HCT116 (cell line): ENCODE measurements at regions of chr2 and their contacts with region 1.

Region 1: DNA sequence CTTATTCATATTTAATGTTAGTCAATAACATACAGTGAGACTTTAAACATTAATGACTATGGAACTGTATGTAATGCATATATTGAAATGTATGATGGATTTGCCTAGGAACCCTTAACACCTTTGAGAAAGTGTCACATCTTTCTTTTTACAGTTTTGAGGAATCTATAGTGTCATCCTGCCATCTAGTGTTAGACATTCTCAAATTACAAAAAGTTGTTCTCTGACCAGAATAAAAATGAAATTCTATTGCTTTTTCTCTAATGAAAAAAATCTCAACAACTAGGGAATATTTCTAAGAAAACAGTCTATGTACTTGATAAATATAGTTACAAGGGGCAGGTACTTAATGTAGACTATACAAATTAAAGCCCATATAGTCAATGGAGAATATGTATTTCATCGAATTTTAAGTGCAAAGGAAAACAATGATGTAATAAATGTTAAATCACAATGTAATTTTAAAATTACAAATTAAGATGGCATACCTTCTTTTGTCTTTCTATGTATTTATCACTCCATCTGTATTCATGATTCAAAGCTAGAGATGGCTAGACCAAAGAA is 5.1 kb upstream of the CALCRL start:
- DNase-seq: peak; percentile 29
- ATAC-seq: no peak
- H3K4me3 ChIP-seq: no peak overlapping the region
- H3K27ac ChIP-seq: no peak overlapping the region
- H3K4me1 ChIP-seq: peaks cover 0 to 6% of the 10 kb centered on the region in 2 experiments; a peak in 2 of 4 replicates
- H3K27me3 ChIP-seq: no peaks in the 10 kb centered on the region
- CTCF ChIP-seq: peak; percentile 18 to 61 (median 59); a peak in 4 of 6 replicates
- POLR2A ChIP-seq: no peak
- RAD21 ChIP-seq: peak; percentile 83

Region 2: DNA sequence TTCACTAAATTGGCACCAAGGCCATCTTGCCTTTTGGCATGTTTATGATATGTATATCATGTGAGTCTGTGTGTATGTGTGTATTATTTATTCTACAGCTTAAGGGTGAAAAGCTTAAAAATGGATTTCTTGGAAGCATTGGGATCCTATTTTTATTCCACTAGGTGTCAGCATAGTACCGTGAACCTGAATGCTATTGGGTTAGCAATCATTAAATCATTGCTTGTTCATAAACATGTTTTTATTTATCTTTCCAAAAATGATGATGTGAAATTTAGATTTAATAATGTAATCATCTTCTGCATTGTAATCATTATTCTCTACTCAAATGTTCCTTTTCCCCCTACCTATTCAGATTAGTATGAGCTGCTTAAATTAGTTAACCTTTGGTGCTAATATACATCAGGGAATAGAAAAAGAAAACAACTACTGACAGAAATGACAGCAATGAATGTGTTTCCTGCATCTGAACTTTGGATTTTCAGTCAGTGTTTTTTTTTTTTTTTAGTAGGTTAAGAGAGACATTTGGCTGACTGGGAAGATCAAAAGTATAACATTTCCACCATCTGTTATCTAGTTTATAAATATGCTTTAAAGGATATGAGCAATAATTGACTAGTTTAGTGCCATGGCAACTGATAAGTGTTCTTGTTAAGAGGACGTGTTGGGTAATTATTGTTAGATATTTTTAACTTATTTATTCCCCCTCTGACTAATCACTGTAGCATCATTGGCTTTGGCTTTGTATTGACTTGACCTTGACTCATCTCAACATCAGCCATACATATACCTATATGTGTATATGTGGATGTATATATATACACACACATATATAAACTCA is 590.1 kb before region 1 on chr2:
- CTCF ChIA-PET with region 1: interaction called, 50 read pairs
- POLR2A ChIA-PET with region 1: no interaction called
- RAD21 ChIA-PET with region 1: interaction called, 3 to 5 read pairs
- intact Hi-C with region 1: loop called (anchors 1 kb)
- DNase-seq: peak; percentile 32
- ATAC-seq: peak; percentile 78
- H3K4me3 ChIP-seq: no peak overlapping the region
- H3K27ac ChIP-seq: no peak overlapping the region
- H3K4me1 ChIP-seq: no peaks in the 10 kb centered on the region
- H3K27me3 ChIP-seq: no peaks in the 10 kb centered on the region
- CTCF ChIP-seq: peak; percentile 54 to 83 (median 61)
- POLR2A ChIP-seq: no peak
- RAD21 ChIP-seq: peak; percentile 87

Region 3: DNA sequence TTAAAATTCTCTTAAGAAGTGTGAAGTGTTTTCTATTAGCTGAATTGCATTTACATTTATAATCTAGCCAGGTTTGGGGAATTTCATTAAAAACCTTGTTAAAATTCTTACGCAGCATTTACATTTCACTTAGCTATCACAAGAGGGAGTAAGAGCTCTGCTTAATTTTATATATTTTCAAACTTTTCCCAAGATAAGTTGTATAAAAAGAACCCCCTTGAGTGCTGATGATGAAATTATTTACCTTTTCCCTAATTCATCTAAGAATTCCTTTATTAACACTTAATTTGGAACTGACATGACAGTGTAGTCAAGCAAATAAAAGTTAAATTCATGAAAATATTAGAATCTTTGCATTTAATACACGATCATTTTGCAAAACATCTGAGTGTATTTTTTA is 549.9 kb before region 1 on chr2:
- CTCF ChIA-PET with region 1: interaction called, 16 read pairs
- POLR2A ChIA-PET with region 1: no interaction called
- RAD21 ChIA-PET with region 1: interaction called in 1 of 2 experiments, 3 read pairs
- intact Hi-C with region 1: loop called (anchors 1 kb)
- DNase-seq: no peak
- ATAC-seq: no peak
- H3K4me3 ChIP-seq: no peak overlapping the region
- H3K27ac ChIP-seq: no peak overlapping the region
- H3K4me1 ChIP-seq: no peaks in the 10 kb centered on the region
- H3K27me3 ChIP-seq: no peaks in the 10 kb centered on the region
- CTCF ChIP-seq: peak; percentile 28 to 62 (median 33); a peak in 4 of 6 replicates
- POLR2A ChIP-seq: no peak
- RAD21 ChIP-seq: peak; percentile 60

Region 4: GRCh38 chr2:187138265-187138664 is 314.9 kb before region 1 on chr2:
- CTCF ChIA-PET with region 1: interaction called, 3 read pairs
- POLR2A ChIA-PET with region 1: no interaction called
- RAD21 ChIA-PET with region 1: interaction called in 1 of 2 experiments, 5 read pairs
- intact Hi-C with region 1: loop called (anchors 2 kb)
- DNase-seq: peak; percentile 24
- ATAC-seq: peak; percentile 84
- H3K4me3 ChIP-seq: no peak overlapping the region
- H3K27ac ChIP-seq: no peak overlapping the region
- H3K4me1 ChIP-seq: no peaks in the 10 kb centered on the region
- H3K27me3 ChIP-seq: no peaks in the 10 kb centered on the region
- CTCF ChIP-seq: peak; percentile 39 to 77 (median 73); a peak in 5 of 6 replicates
- POLR2A ChIP-seq: no peak
- RAD21 ChIP-seq: peak; percentile 57

Region 5: DNA sequence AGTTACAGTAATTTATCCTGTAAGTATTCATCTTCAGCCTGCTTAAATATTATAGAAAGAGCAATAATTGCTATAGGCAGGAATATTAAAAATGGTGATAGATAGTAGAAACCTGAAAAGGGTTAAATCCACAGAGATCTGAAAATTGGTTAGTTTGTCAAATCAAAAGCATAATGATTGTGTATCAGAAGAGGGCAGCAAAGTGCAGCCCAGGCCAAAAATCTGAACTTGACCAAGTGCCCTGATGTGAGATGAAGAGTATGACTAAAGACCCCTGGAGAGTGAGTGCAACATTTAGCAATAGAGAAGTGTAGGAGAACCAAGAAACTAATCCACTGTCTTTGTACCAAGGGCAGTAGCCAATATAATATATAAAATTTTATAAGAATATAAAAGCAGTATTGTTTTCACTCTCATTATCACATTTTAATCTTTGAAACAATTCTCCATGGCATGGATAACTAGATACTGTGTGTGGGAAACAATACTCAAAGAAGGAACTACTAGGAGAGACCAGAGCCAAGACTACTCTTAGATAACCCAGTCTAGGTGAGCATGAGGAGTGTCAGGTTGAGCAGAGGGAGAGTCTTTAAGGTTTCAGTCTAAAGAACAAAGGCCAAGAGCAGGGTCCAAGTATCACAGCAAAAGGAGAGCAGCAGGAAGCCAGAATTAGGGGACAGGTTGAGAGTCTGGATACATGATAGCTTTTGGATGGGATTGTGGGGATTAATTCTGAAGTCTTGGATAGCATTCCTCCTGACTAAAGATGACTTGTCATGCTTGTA is 153.8 kb before region 1 on chr2:
- CTCF ChIA-PET with region 1: no interaction called
- POLR2A ChIA-PET with region 1: no interaction called
- RAD21 ChIA-PET with region 1: no interaction called
- intact Hi-C with region 1: loop called (anchors 2 kb)
- DNase-seq: no peak
- ATAC-seq: peak; percentile 36; the same call in 1 of the 2 replicates
- H3K4me3 ChIP-seq: no peak overlapping the region
- H3K27ac ChIP-seq: no peak overlapping the region
- H3K4me1 ChIP-seq: no peaks in the 10 kb centered on the region
- H3K27me3 ChIP-seq: no peaks in the 10 kb centered on the region
- CTCF ChIP-seq: peak; percentile 23 to 41 (median 35); a peak in 4 of 6 replicates
- POLR2A ChIP-seq: no peak
- RAD21 ChIP-seq: peak; percentile 58

Region 6: DNA sequence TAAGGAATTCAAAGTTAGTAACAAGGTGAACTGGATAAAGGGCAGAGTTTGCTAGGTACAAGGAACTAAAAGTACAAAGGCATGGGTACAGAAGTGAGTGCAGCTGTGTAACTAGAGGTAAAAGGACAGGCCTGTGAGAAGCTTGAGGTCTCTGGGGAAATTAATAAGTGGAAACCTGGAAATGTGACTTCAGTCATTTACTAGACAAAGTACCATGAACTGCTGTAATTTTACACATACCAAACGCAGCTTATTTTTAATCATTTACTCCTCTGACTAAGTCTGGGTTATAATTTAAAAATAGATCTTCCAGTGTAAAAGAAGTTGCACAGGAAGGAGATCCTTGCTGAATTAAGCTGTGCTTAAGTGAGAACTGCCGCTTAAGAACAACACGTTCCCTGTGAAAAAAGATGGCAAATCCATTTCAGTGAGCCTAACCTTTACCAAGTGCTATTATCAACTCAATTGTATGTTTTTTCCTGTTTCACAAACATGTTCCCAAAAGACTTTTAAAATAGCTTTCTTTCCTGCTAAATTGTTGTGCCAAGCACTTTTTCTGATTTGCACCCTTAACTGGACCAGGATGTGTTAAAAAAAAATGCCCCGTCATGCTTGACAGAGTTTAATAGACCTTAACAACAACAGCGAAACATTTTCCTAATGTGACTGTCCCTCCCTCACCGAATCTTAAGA is 49.4 kb before region 1 on chr2:
- CTCF ChIA-PET with region 1: no interaction called
- POLR2A ChIA-PET with region 1: no interaction called
- RAD21 ChIA-PET with region 1: no interaction called
- intact Hi-C with region 1: no loop called
- DNase-seq: no peak
- ATAC-seq: no peak
- H3K4me3 ChIP-seq: no peak overlapping the region
- H3K27ac ChIP-seq: no peak overlapping the region
- H3K4me1 ChIP-seq: no peaks in the 10 kb centered on the region
- H3K27me3 ChIP-seq: no peaks in the 10 kb centered on the region
- CTCF ChIP-seq: no peak
- POLR2A ChIP-seq: no peak
- RAD21 ChIP-seq: no peak